HEK293T (cell line): ENCODE measurements at regions of chrX and their contacts with region 1.

Region 1: DNA sequence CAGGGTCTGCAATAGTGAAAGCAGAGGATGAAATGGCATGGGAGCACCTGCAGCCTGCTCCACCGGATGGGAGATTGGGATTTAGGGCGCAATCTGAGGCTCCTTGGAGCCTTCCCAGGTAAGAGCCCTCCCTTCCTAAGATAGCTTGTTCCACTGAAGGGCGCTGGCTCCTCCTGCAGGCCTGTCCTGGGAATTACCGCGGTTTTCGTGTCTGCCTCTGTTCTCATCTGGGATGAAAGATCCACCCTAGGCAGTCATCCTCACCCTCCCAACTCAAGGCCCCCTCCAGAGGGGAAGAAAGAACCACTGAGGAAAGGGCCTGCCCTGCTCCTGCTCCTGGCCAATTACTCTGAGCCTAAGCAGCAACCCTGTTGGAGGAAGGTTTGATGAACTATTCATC is 547.5 kb downstream of the SMARCA1 start:
- DNase-seq: peak; percentile 70

Region 2: GRCh38 chrX:128816919-128817318 is 158.8 kb before region 1 on chrX:
- CTCF ChIA-PET with region 1: interaction called, 10 read pairs
- POLR2A ChIA-PET with region 1: no interaction called
- DNase-seq: peak; percentile 32